Caco-2 (cell line): ENCODE measurements at regions of chr19 and their contacts with region 1.

Region 1: GRCh38 chr19:11587302-11587974 is 9.8 kb upstream of the ZNF627 start:
- DNase-seq: peak; percentile 69 to 81
- H3K4me3 ChIP-seq: no peak overlapping the region
- H3K4me3 Mint-ChIP-seq: no peak overlapping the region
- H3K27ac Mint-ChIP-seq: no peak overlapping the region
- H3K4me1 ChIP-seq: peaks cover 6% of the 10 kb centered on the region
- H3K4me1 Mint-ChIP-seq: peaks cover 11% of the 10 kb centered on the region
- H3K27me3 ChIP-seq: no peaks in the 10 kb centered on the region
- H3K27me3 Mint-ChIP-seq: peaks cover 3% of the 10 kb centered on the region
- CTCF ChIP-seq: peak; percentile 90

Region 2: DNA sequence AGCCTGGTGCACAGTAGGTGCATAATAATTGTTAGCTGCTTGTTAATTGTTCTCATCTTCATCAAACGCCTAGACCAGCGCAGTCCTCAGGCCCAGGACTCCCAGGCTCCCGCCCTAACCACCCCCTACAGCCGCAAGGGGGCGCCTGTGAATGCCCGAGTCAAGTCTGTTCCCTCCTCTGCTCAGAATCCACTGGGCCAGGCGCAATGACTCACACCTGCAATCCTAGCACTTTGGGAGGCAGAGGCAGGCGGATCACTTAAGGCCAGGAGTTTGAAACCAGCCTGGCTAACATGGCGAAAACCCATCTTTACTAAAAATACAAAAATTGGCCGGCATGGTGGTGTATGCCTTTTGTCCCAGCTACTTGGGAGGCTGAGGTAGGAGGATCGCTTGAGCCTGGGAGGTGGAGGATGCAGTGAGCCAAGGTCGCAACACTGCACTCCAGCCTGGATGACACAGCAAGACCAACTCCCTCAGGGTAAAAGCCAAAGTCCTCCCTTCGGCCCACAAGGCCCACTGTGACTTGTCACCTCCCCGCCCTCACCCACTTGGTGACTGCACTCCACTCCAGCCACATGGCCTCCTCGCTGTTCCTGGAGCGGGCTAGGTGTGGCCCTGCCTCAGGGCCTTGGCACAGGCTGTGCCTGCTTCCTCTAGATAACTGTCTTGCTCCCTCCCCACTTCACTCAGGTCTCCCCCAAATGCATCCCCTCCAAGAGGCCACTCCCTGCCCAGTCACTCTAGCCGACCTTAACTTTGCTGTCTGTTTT is 90.9 kb before region 1 on chr19:
- CTCF ChIA-PET with region 1: no interaction called
- POLR2A ChIA-PET with region 1: no interaction called
- intact Hi-C with region 1: loop called (anchors 1 kb)
- DNase-seq: peak; percentile 75 to 76
- H3K4me3 ChIP-seq: no peak overlapping the region
- H3K4me3 Mint-ChIP-seq: no peak overlapping the region
- H3K27ac Mint-ChIP-seq: no peak overlapping the region
- H3K4me1 ChIP-seq: no peaks in the 10 kb centered on the region
- H3K4me1 Mint-ChIP-seq: no peaks in the 10 kb centered on the region
- H3K27me3 ChIP-seq: no peaks in the 10 kb centered on the region
- H3K27me3 Mint-ChIP-seq: no peaks in the 10 kb centered on the region
- CTCF ChIP-seq: peak; percentile 55 to 57

Region 3: DNA sequence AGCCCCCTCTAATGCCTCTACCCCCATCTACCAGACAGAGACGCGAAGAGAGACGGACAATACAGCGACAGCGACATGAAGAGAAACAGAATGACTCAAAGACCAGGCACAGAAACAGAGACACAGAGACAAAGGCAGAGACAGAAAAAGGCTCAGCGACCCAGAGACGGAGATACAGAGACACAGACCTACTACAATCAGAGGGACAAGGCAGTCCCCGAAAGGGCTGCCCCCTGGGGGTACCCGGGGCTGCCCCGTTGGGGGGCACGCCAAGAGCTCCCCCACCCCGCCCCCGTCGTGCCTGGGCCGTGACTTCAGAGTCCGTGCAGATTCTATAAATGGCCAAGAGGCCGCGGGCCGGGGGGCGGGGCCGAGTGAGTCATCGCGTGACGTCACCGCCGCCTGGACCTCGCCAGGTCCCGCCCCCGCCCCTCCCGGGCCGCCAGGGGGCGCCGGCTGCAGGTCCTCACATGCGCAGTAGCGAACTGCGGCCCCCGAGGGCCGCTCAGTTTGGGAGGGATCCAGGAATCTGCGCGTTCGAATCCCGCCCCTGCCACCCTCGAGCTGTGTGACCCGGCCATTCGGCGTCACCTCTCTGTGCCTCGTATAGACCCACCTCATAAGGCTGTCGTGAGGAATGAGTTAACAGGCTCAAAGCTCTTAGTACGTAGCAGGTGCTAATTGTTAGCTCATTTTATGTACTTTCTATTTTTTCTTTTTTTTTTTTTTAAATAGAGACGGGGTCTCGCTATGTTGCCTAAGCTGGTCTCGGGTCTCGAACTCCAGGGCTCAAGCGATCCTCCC is 51.4 kb before region 1 on chr19:
- CTCF ChIA-PET with region 1: no interaction called
- POLR2A ChIA-PET with region 1: no interaction called
- intact Hi-C with region 1: loop called (anchors 2 kb)
- DNase-seq: peak; percentile 83 to 92
- H3K4me3 ChIP-seq: peak overlapping the region; percentile 28
- H3K4me3 Mint-ChIP-seq: peak overlapping the region; percentile 69
- H3K27ac Mint-ChIP-seq: peak overlapping the region; percentile 83
- H3K4me1 ChIP-seq: peaks cover 4% of the 10 kb centered on the region; the same call in 1 of the 2 replicates
- H3K4me1 Mint-ChIP-seq: peaks cover 6% of the 10 kb centered on the region
- H3K27me3 ChIP-seq: no peaks in the 10 kb centered on the region
- H3K27me3 Mint-ChIP-seq: no peaks in the 10 kb centered on the region
- CTCF ChIP-seq: peak; percentile 75 to 84

Region 4: DNA sequence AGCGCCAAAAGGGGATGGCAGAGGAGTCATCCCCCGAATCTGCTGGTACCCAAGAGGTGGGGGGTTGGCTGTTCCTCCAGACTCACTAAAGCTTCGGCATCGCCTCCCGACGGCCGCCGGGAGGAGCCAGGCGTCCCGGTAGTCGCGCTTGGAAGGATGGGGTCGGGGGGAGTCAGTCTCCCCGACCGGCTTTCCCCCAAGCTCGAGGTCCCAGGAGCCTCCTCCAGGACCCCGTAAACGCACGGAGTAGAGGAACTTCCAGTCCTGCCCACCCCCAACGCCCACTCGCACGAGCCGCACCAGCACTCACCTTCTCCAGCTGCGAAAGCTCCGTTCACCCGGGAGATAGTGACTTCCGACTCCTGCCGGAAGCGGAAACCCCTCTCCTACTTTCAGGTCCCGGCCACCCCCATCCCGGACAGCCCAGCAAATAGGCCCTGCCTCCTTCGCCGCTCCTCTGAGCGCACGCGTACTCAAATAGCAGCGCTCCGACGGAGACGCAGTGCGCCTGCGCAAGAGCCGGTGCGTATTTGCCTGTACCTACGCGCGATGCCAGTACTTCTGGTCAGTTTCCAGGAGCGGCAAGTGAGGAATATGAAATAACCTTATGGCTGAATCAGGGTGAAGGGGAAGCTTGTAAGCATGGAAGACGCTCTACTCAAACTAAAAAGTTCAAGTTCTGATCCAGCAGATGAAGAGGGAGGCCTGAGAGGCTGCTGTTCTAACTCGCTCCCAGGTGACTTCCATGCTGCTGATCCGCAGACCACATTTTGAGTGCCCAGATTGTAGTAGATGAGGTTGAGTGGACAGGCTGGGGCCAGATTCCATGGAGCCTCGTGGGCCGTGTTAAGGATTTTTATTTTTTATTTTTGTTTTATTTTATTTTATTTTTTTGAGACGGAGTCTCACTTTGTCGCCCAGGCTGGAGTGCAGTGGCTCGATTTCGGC is 28.3 kb before region 1 on chr19 and contains the start of gene ELOF1:
- CTCF ChIA-PET with region 1: no interaction called
- POLR2A ChIA-PET with region 1: no interaction called
- intact Hi-C with region 1: loop called (anchors 1 kb)
- DNase-seq: peak; percentile 96 to 97
- H3K4me3 ChIP-seq: peak within 1 kb of the TSS; percentile 73
- H3K4me3 Mint-ChIP-seq: peak within 1 kb of the TSS; percentile 90
- H3K27ac Mint-ChIP-seq: peak within 1 kb of the TSS; percentile 90
- H3K4me1 ChIP-seq: 0 out of 2 replicates have a peak, but pooled peaks cover 5% of the 10 kb centered on the region
- H3K4me1 Mint-ChIP-seq: peaks cover 13% of the 10 kb centered on the region
- H3K27me3 ChIP-seq: no peaks in the 10 kb centered on the region
- H3K27me3 Mint-ChIP-seq: no peaks in the 10 kb centered on the region
- CTCF ChIP-seq: peak in 1 of 2 experiments; percentile 39
- total RNA-seq, gene ELOF1: 48.5 and 49.4 TPM in 2 replicates